ENCODE measurements at regions of chr2 and their contacts with region 1.

Region 1: GRCh38 chr2:81523344-81523743 is 1218.8 kb upstream of the LRRTM1 start:
- DNase-seq: no peak
- H3K4me3 ChIP-seq: no peak overlapping the region
- H3K27ac ChIP-seq: no peak overlapping the region
- H3K4me1 ChIP-seq: no peaks in the 10 kb centered on the region
- H3K27me3 ChIP-seq: no peaks in the 10 kb centered on the region
- CTCF ChIP-seq: no peak
- POLR2A ChIP-seq: no peak

Region 2: GRCh38 chr2:80199504-80199903 is 1323.8 kb before region 1 on chr2:
- intact Hi-C with region 1: loop called (anchors 5 kb)
- DNase-seq: no peak
- H3K4me3 ChIP-seq: no peak overlapping the region
- H3K27ac ChIP-seq: no peak overlapping the region
- H3K4me1 ChIP-seq: no peaks in the 10 kb centered on the region
- H3K27me3 ChIP-seq: no peaks in the 10 kb centered on the region
- CTCF ChIP-seq: no peak
- POLR2A ChIP-seq: no peak

Region 3: DNA sequence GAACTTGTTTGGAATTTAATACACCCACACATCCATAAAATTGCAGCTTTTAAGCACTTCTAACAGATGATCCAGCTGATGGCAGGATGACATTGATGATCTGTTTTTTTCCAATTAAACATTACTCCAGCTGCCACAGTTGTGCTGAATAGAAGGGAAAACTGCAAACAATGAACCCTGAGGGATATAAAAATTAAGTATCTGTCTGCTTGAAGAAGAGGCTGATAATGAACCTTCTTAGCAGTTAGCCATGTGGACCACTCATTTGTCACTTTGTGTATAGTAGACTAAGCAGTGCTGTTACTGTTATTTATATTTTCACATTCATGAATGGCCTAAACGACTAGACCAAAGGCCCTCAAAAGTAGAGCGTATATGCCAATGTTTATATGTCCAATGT is 17.8 kb before region 1 on chr2:
- intact Hi-C with region 1: no loop called
- DNase-seq: no peak
- H3K4me3 ChIP-seq: no peak overlapping the region
- H3K27ac ChIP-seq: no peak overlapping the region
- H3K4me1 ChIP-seq: no peaks in the 10 kb centered on the region
- H3K27me3 ChIP-seq: no peaks in the 10 kb centered on the region
- CTCF ChIP-seq: no peak
- POLR2A ChIP-seq: no peak

Region 4: DNA sequence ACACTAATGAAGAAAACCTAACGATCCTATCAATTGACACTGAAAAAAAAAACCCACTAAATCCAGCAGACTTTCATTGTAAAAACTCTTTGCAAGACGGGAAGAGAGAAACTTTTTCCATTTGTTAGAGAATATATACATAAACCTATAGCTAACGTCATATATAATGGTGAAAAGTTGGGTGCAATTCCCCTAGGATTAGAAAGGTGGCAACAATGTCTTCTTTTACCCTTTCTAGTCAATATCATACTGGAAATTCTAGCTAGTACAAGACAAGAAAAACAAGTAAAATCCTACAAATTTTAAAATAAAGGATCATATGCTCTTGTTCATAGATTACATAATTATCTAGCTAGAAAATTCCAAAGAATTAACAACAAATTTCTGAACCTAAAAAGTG is 377.7 kb after region 1 on chr2:
- intact Hi-C with region 1: no loop called
- DNase-seq: no peak
- H3K4me3 ChIP-seq: no peak overlapping the region
- H3K27ac ChIP-seq: no peak overlapping the region
- H3K4me1 ChIP-seq: no peaks in the 10 kb centered on the region
- H3K27me3 ChIP-seq: no peaks in the 10 kb centered on the region
- CTCF ChIP-seq: no peak
- POLR2A ChIP-seq: no peak

Measured in breast epithelium (tissue), 4 donors.